CD8-positive, alpha-beta T cell (primary cell): ENCODE measurements at regions of chr2 and their contacts with region 1.

Region 1: DNA sequence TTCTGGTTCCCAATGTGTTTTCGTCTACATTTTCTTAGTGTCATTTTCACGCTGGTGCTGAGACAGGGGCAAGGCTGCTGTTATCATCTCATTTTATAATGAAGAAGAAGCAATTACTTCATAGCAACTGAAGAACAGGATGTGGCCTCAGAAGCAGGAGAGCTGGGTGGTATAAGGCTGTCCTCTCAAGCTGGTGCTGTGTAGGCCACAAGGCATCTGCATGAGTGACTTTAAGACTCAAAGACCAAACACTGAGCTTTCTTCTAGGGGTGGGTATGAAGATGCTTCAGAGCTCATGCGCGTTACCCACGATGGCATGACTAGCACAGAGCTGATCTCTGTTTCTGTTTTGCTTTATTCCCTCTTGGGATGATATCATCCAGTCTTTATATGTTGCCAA is 7.3 kb downstream of the IL36G start:
- DNase-seq: peak in 8 of 9 experiments; percentile 12 to 78 (median 45)
- ATAC-seq: peak; percentile 97
- H3K4me3 ChIP-seq: no peak overlapping the region
- H3K4me3 Mint-ChIP-seq: peak overlapping the region; percentile 0
- H3K27ac ChIP-seq: peak overlapping the region; percentile 4 to 53
- H3K27ac Mint-ChIP-seq: peak overlapping the region; percentile 86
- H3K4me1 ChIP-seq: peaks cover 30% of the 10 kb centered on the region
- H3K4me1 Mint-ChIP-seq: peaks cover 25% of the 10 kb centered on the region
- H3K27me3 ChIP-seq: no peaks in the 10 kb centered on the region
- H3K27me3 Mint-ChIP-seq: no peaks in the 10 kb centered on the region
- CTCF ChIP-seq: no peak

Region 2: DNA sequence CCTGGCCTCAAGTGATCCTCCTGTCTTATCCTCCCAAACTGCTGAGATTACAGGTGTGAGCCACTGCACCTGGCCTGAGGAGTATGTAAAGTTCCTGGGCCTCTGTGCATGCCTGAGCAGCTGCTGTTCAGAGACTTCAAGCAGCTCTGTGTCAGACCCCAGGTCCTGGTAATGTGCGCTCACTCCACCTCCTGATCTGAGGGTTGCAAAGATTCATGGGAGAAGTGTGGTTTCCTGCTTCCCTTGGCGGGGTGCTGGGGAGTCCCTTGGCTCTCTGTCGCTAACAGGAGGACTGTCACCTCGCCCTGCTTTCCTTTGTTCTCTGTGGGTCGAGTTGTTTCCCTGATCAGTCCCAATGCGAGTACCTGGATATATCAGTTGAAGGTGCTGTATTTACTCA is 11.5 kb after region 1 on chr2:
- CTCF ChIA-PET with region 1: interaction called, 4 read pairs
- POLR2A ChIA-PET with region 1: interaction called, 14 read pairs
- intact Hi-C with region 1: loop called in 1 of 2 experiments (anchors 1 kb)
- DNase-seq: peak; percentile 56 to 93 (median 71)
- ATAC-seq: peak; percentile 97
- H3K4me3 ChIP-seq: peak overlapping the region in 1 of 2 experiments; percentile 6
- H3K4me3 Mint-ChIP-seq: peak overlapping the region; percentile 40
- H3K27ac ChIP-seq: peak overlapping the region in 1 of 2 experiments; percentile 21
- H3K27ac Mint-ChIP-seq: peak overlapping the region; percentile 97
- H3K4me1 ChIP-seq: peaks cover 36% of the 10 kb centered on the region
- H3K4me1 Mint-ChIP-seq: peaks cover 46% of the 10 kb centered on the region
- H3K27me3 ChIP-seq: no peaks in the 10 kb centered on the region
- H3K27me3 Mint-ChIP-seq: no peaks in the 10 kb centered on the region
- CTCF ChIP-seq: no peak

Region 3: GRCh38 chr2:113088213-113088992 is 103.3 kb after region 1 on chr2:
- CTCF ChIA-PET with region 1: no interaction called
- POLR2A ChIA-PET with region 1: no interaction called
- intact Hi-C with region 1: no loop called
- DNase-seq: no peak
- ATAC-seq: no peak
- H3K4me3 ChIP-seq: no peak overlapping the region
- H3K4me3 Mint-ChIP-seq: no peak overlapping the region
- H3K27ac ChIP-seq: no peak overlapping the region
- H3K27ac Mint-ChIP-seq: no peak overlapping the region
- H3K4me1 ChIP-seq: no peaks in the 10 kb centered on the region
- H3K4me1 Mint-ChIP-seq: no peaks in the 10 kb centered on the region
- H3K27me3 ChIP-seq: no peaks in the 10 kb centered on the region
- H3K27me3 Mint-ChIP-seq: peaks cover 6% of the 10 kb centered on the region
- CTCF ChIP-seq: no peak

Region 4: DNA sequence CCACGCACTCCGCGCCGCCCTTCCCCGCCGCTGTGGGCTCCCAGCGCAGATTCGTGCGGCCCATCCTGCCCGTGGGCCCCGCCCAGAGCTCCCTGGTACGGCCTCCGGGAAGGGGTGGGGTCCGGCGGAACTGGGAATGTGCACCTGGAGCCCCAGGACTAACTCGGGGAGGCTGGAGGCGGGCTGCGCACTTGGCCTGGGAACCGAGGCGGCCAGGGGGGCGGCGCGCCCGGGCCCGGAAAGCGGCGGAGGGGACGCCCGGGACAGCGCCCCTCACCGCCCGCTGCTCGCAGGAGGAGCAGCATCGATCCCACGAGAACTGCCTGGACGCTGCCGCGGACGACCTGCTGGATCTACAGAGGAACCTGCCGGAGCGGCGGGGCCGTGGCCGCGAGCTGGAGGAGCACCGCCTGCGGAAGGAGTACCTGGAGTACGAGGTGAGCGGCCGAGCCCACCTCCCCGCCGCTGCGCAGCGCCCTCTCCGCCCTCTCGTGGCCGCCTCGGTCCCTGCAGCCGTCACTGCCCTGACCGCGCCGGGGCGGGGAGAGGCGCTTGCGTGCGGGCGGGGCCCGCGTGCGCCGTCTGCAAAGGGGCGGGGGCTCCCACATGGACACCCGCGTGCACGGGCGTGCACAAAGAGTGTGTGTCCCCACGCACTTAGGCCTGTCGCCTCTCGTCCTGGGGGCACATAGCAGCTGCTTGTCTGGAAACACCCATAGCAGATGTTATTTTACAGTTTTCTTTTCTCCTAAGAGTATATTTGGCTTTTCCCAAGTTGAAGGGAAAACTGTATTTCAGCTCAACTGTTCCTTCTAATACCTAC is 213.9 kb after region 1 on chr2:
- CTCF ChIA-PET with region 1: interaction called, 3 read pairs
- POLR2A ChIA-PET with region 1: no interaction called
- intact Hi-C with region 1: loop called in 1 of 2 experiments (anchors 5 kb)
- DNase-seq: peak; percentile 48 to 84 (median 73)
- ATAC-seq: peak; percentile 77
- H3K4me3 ChIP-seq: no peak overlapping the region
- H3K4me3 Mint-ChIP-seq: no peak overlapping the region
- H3K27ac ChIP-seq: no peak overlapping the region
- H3K27ac Mint-ChIP-seq: no peak overlapping the region
- H3K4me1 ChIP-seq: peaks cover 7% of the 10 kb centered on the region
- H3K4me1 Mint-ChIP-seq: peaks cover 24% of the 10 kb centered on the region
- H3K27me3 ChIP-seq: no peaks in the 10 kb centered on the region
- H3K27me3 Mint-ChIP-seq: no peaks in the 10 kb centered on the region
- CTCF ChIP-seq: peak; percentile 76